ENCODE measurements at regions of chr19 and their contacts with region 1.

Region 1: DNA sequence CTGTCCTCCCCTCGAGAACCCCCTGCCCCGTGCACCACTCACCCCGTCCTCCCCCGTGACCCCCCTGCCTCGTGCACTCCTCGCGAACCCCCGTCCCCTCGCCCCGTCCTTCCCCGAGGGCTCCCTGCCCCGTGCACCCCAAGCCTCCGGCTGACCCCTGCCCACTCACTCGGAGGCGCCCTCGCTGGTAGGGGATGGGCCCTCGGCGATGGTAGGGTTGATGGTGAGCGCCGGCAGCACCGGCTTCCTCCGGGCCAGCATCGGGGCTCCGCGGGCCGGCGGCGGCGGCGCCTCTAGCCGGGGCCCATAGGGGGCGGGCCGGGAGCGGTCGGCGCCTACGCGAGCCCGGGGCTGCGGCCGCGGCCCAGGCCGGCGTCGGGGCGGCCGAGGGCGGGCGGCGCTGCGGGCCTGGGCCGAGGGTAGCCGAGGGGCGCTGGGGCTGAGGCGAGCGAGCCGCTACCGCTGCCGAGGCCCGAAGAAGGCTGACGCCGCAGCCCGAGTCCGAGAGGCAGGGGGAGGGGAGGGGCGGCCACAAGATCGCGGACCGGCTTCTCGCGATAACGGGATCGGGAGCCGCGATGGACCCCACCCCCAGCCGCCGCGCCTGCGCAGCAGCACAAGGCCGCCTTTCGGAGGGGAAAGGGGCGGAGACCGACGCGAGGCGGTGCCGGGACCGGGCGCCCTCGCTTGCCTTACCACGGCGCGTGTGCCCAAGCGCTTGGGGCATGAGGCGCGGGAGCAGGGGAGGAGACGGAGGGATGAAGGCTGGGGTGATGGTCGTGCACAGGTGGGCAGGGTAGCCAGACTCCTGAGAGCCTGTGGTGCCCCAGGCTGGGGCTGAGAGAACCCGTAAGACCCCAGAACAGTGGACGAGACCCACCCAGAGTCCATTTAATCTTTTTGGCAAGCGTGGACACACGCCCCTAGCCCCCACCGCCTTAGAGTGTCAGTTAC is at the start of gene MAP2K2:
- DNase-seq: peak; percentile 99
- H3K4me3 Mint-ChIP-seq: peak within 1 kb of the TSS; percentile 99
- H3K27ac Mint-ChIP-seq: peak within 1 kb of the TSS; percentile 95
- H3K4me1 Mint-ChIP-seq: peaks cover 22% of the 10 kb centered on the region
- H3K27me3 Mint-ChIP-seq: no peaks in the 10 kb centered on the region
- total RNA-seq, gene MAP2K2: 125 and 135 TPM in 2 replicates

Region 2: DNA sequence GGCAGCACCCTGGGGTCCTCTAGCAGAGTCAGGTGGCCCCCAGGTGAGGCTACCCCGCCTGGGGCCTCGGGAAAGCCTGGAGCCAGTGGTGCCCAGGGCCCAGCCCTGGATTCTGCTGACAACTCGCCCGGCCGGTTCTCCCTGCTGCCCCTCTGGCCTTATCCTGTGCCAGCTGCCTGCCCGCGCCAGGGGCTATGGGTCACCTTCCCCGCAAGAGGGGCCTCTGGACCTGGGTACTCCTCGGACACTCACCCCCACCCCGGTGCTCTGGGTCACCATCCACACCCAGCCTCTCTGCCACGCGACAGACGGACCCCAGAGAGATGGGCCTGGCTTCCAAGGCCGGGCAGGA is 81.2 kb before region 1 on chr19:
- intact Hi-C with region 1: no loop called
- DNase-seq: no peak
- H3K4me3 Mint-ChIP-seq: no peak overlapping the region
- H3K27ac Mint-ChIP-seq: no peak overlapping the region
- H3K4me1 Mint-ChIP-seq: peaks cover 1% of the 10 kb centered on the region
- H3K27me3 Mint-ChIP-seq: no peaks in the 10 kb centered on the region

Region 3: DNA sequence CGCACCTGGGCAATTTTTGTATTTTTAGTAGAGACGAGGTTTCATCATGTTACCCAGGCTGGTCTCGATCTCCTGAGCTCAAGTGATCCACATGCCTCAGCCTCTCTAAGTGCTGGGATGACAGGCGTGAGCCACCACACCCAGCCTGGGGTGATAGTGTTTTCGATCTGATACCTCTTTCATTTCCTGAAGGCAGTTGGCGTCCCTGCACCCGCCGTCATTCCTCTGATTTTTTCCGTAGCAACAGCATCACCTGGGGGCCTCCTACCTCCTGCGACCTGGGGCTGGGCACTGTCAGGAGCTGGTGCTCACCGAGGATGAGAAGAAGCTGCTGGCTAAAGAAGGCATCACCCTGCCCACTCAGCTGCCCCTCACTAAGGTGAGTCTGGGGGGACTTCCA is 40.4 kb after region 1 on chr19:
- intact Hi-C with region 1: no loop called
- DNase-seq: no peak
- H3K4me3 Mint-ChIP-seq: no peak overlapping the region
- H3K27ac Mint-ChIP-seq: no peak overlapping the region
- H3K4me1 Mint-ChIP-seq: no peaks in the 10 kb centered on the region
- H3K27me3 Mint-ChIP-seq: no peaks in the 10 kb centered on the region

Region 4: GRCh38 chr19:4182084-4182810 is 58.4 kb after region 1 on chr19 and contains the starts of genes ANKRD24 and SIRT6:
- intact Hi-C with region 1: loop called (anchors 1 kb)
- DNase-seq: peak; percentile 99
- H3K4me3 Mint-ChIP-seq: peak within 1 kb of the TSS; percentile 99
- H3K27ac Mint-ChIP-seq: peak within 1 kb of the TSS; percentile 96
- H3K4me1 Mint-ChIP-seq: peaks cover 40% of the 10 kb centered on the region
- H3K27me3 Mint-ChIP-seq: peaks cover 2% of the 10 kb centered on the region
- total RNA-seq, gene ANKRD24: 0.50 and 0.72 TPM in 2 replicates
- total RNA-seq, gene SIRT6: 39.8 and 48.0 TPM in 2 replicates

Measured in activated CD4-positive, alpha-beta T cell treated with anti-CD3 and anti-CD28 coated beads, Interleukin-2, amount 10 ng/mL, durations not matched to agents 24 days and 14 days (primary cell).